Heart right ventricle (tissue), 16 donors: ENCODE measurements at regions of chr12 and their contacts with region 1.

Region 1: GRCh38 chr12:76031537-76032073 is at the start of gene PHLDA1:
- DNase-seq: peak; percentile 96
- ATAC-seq: peak; percentile 90 to 97 (median 94)
- H3K4me3 ChIP-seq: peak within 1 kb of the TSS; percentile 63 to 91 (median 80)
- H3K27ac ChIP-seq: peak within 1 kb of the TSS; percentile 90 to 99 (median 96)
- H3K4me1 ChIP-seq: peaks cover 0 to 48% (median 21%) of the 10 kb centered on the region in 9 donors
- H3K27me3 ChIP-seq: peaks cover 0 to 21% (median 0%) of the 10 kb centered on the region in 7 donors
- CTCF ChIP-seq: peak; percentile 26 to 82 (median 64)
- total RNA-seq, gene PHLDA1: 1.5 to 43.5 (median 23.3) TPM

Region 2: DNA sequence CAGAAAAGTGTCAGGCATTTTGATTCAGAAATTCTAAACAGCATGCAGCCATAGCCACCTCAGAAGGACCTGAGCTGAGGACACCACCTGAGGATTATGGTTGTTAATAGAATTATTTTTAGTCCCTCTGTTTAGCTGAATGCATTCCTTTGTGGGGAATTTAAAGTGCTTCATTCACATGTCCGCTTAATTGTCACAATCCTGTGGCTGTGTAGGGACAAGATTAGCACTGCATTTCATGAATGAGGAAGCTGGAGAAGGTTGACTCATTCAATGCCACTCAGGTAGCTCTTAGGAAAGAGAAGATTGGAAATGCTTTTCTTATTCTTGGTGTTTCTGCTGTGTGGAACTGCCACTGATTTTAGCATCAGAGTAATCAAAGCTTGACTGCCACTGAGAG is 478.2 kb before region 1 on chr12:
- intact Hi-C with region 1: loop called in 5 of 10 experiments (anchors 2 to 10 kb)
- DNase-seq: no peak
- ATAC-seq: peak in 7 of 8 donors; percentile 59 to 93 (median 84)
- H3K4me3 ChIP-seq: no peak overlapping the region
- H3K27ac ChIP-seq: peak overlapping the region in 6 of 10 donors; percentile 23 to 83 (median 70)
- H3K4me1 ChIP-seq: peaks cover 0 to 34% (median 25%) of the 10 kb centered on the region in 9 donors
- H3K27me3 ChIP-seq: no peaks in the 10 kb centered on the region
- CTCF ChIP-seq: no peak

Region 3: DNA sequence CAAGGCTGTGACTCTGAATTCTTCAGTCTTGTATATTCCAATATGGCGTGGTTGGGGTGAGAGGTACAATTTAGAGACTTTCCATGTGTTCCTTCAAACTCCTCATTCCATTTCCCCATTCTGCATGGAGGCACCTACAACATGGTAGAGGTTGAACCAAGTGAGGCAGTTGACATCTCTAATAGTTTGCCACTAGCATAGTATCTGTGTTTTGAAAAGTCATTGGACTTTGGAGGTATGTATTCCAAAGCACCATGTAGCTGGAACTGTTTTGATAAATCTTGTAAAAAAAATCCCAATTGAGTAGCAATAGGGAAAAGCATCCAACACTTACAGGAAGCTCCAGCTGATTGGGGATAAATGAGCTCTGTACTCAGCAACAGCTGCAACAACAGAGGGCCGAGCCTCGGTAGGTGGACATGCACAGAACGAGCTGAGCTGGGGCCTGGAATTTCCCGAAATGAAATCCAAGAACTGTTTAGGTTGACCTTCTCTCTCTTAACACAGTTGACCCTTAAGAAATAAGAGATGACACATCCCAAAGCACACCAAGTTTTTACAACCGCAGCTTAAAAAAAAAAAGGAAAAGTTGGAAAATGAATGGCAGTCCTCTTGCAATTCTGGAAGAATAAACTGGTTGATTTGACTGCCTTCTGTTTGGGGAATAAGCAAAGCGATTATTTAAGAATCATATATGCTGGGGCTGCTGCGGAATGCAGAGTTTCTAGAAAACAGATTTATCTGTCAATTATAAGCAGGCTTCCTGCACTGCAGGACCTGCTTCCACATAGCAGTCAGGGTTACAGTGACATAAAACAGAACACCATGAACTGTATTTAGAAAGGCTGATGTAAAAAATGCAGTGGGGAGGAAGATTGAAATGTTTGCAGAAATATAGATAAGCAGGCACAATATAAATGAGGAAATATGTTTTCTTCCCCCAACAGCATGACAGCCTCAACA is 325.6 kb before region 1 on chr12:
- intact Hi-C with region 1: loop called in 2 of 10 experiments (anchors 5 to 10 kb)
- DNase-seq: peak; percentile 26 to 69
- ATAC-seq: peak; percentile 77 to 92 (median 86)
- H3K4me3 ChIP-seq: no peak overlapping the region
- H3K27ac ChIP-seq: peak overlapping the region; percentile 16 to 87 (median 72)
- H3K4me1 ChIP-seq: peaks cover 0 to 69% (median 44%) of the 10 kb centered on the region in 9 donors
- H3K27me3 ChIP-seq: no peaks in the 10 kb centered on the region
- CTCF ChIP-seq: no peak

Region 4: DNA sequence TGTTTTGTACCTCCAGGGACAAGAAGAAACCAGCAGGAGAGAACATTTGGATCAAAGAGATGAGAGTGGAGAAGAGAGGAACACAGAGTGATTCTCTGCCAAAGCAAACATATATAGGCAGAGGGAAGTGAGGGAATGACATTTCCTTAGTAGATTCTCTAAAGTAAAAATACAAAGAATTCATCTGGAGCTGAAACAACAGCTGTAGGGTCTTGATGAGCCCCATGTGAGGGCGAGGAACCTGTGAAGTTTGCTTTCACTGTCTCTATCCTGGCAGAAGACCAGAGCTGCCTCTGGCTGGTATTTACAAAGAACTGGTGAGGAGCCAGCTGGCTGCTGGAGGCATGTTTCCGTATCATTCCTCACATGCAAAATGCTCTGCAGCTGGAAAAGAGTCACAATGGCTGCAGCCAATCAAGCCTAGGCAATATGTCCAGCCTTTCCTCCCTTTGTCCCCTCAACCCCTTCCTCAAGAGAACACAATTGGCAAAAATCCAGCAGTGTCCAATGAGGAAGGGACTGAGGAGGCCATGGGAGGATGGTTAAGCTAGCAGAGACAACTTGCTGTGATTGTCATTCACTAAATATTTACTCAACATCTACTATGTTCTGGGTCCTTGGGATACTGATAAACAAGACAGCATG is 122.5 kb before region 1 on chr12:
- intact Hi-C with region 1: loop called in 4 of 10 experiments (anchors 1 to 10 kb)
- DNase-seq: peak; percentile 66 to 85
- ATAC-seq: peak; percentile 76 to 85 (median 84)
- H3K4me3 ChIP-seq: no peak overlapping the region
- H3K27ac ChIP-seq: peak overlapping the region in 9 of 10 donors; percentile 1 to 74 (median 61)
- H3K4me1 ChIP-seq: peaks cover 3 to 44% (median 25%) of the 10 kb centered on the region in 9 donors
- H3K27me3 ChIP-seq: no peaks in the 10 kb centered on the region
- CTCF ChIP-seq: no peak

Region 5: DNA sequence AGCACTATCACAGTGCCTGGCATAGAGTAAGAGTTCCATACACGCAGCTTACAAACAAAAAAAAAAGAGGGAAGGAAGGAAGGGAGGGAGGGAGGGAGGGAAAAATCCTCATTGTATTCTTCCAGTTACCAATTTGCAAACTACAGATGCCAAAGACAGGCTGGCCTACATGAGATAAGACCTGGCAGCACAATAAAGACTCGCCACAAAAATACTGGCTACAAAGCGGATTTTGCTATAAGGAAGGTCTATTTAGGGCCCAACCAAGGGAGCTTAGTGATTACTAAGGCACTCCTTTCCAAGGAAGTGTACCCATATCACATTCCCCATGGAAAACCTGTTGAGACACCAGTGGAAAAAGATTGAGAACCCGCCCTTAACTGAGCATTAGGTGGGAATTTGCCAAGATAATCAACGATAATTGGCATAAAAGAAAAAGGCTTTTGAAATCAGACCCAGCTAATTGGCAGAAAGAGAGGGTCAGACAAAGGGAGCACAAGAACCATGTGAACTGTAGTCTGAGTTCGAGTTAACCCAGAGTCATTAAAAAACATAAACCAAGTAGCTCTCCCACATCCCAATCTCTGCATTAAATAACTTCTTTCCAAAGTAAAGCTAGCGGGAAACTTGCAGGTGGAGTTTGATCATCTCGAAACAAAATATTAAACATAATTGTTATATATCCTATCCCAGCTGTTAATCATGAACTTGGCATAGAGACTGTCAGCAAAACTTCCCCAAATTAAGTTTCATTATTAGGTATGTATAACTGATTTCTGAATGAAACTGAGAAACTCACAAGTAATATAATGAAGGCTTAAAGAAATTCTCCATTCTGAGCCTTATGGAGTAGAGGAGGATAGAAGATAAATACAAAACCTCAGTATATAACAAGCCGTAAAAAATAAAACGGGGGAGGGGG is 50.1 kb before region 1 on chr12:
- intact Hi-C with region 1: loop called in 2 of 10 experiments (anchors 5 kb)
- DNase-seq: no peak
- ATAC-seq: no peak
- H3K4me3 ChIP-seq: no peak overlapping the region
- H3K27ac ChIP-seq: peak overlapping the region in 7 of 10 donors; percentile 15 to 62 (median 54)
- H3K4me1 ChIP-seq: peaks cover 6 to 58% (median 32%) of the 10 kb centered on the region in 9 donors
- H3K27me3 ChIP-seq: no peaks in the 10 kb centered on the region
- CTCF ChIP-seq: no peak